ENCODE measurements at regions of chr2 and their contacts with region 1.

Region 1: GRCh38 chr2:85707304-85707703 is 13.1 kb downstream of the GNLY start:
- DNase-seq: peak; percentile 47
- ATAC-seq: peak; percentile 82
- H3K4me3 Mint-ChIP-seq: no peak overlapping the region
- H3K27ac Mint-ChIP-seq: no peak overlapping the region
- H3K4me1 Mint-ChIP-seq: peaks cover 15% of the 10 kb centered on the region
- H3K27me3 Mint-ChIP-seq: peaks cover 12% of the 10 kb centered on the region
- CTCF ChIP-seq: peak; percentile 72; the same call in 1 of the 2 replicates

Region 2: DNA sequence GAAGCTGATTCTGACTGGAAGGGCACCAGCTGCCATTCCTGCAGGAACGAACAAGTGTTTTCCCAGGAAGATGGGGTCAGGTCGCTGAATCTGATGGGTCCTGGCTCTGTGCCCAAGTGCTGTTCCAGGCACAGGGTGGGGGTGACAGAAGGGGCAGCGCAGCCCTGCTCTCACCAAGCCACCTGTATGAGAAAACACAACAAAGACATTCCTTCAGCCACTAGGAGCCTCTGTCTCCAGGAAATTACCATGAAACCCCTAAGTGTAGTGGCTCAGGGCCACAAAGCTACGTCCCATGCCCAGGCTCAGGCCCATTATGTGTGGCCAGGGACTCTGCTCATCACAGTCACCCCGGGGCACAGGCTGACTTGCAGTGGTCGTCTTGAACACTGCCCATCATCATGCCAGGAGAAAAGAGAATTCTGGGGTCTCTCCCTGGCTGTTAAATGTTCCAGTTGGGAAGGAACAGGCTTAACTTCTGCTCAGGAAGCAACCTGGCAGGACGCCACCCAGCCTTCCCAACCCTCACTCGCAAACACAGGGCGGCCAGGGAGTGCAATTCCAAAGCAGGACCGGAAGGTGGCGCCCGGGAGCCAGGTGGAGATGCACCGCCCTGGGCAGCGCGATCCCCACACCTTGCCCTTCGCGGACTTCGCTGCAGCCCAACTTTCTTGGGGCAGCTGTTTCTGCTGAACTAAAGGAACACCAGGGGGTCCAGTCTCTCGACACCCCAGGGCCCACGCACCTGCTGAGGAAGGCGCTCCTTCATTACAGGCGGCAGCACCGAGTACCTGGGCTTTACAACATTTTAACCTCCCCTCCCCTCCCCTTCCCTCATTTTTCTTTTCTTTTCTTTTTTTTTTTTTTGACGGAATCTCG is 28.3 kb before region 1 on chr2:
- CTCF ChIA-PET with region 1: interaction called, 42 read pairs
- POLR2A ChIA-PET with region 1: no interaction called
- DNase-seq: peak; percentile 92
- ATAC-seq: peak; percentile 96
- H3K4me3 Mint-ChIP-seq: no peak overlapping the region; the same call in 1 of the 2 replicates
- H3K27ac Mint-ChIP-seq: no peak overlapping the region
- H3K4me1 Mint-ChIP-seq: peaks cover 12% of the 10 kb centered on the region
- H3K27me3 Mint-ChIP-seq: peaks cover 5% of the 10 kb centered on the region
- CTCF ChIP-seq: peak; percentile 96

Region 3: DNA sequence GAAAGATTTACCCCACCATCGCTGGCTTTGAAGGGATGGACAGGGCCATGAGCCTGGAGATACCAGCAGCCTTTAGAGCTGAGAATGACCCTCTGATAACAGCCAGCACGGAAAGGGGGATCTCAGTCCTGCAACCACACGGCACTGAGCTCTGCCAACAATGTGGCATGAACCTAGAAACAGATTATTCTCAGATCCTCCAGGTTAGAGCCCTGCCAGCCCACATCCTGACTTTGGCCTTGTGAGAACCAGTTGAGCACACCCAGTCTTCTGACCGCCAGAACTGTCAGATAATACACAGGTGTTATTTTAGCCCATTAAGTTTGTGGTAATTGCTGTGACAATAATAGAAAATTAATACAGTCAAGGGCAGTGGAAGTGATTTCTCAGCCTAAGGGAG is 22.5 kb before region 1 on chr2:
- CTCF ChIA-PET with region 1: interaction called, 42 read pairs
- POLR2A ChIA-PET with region 1: no interaction called
- DNase-seq: no peak
- ATAC-seq: no peak
- H3K4me3 Mint-ChIP-seq: no peak overlapping the region
- H3K27ac Mint-ChIP-seq: no peak overlapping the region
- H3K4me1 Mint-ChIP-seq: 0 out of 2 replicates have a peak, but pooled peaks cover 4% of the 10 kb centered on the region
- H3K27me3 Mint-ChIP-seq: peaks cover 7% of the 10 kb centered on the region
- CTCF ChIP-seq: no peak

Region 4: GRCh38 chr2:85694052-85695025 is 13.0 kb before region 1 on chr2 and contains the start of gene GNLY:
- CTCF ChIA-PET with region 1: interaction called, 17 read pairs
- POLR2A ChIA-PET with region 1: no interaction called
- DNase-seq: no peak
- ATAC-seq: no peak
- H3K4me3 Mint-ChIP-seq: no peak within 1 kb of the TSS
- H3K27ac Mint-ChIP-seq: no peak within 1 kb of the TSS
- H3K4me1 Mint-ChIP-seq: no peaks in the 10 kb centered on the region
- H3K27me3 Mint-ChIP-seq: no peaks in the 10 kb centered on the region; the same call in 1 of the 2 replicates
- CTCF ChIP-seq: no peak
- total RNA-seq, gene GNLY: 0.44 TPM in 1 of 3 replicates, not detected in the others

Region 5: DNA sequence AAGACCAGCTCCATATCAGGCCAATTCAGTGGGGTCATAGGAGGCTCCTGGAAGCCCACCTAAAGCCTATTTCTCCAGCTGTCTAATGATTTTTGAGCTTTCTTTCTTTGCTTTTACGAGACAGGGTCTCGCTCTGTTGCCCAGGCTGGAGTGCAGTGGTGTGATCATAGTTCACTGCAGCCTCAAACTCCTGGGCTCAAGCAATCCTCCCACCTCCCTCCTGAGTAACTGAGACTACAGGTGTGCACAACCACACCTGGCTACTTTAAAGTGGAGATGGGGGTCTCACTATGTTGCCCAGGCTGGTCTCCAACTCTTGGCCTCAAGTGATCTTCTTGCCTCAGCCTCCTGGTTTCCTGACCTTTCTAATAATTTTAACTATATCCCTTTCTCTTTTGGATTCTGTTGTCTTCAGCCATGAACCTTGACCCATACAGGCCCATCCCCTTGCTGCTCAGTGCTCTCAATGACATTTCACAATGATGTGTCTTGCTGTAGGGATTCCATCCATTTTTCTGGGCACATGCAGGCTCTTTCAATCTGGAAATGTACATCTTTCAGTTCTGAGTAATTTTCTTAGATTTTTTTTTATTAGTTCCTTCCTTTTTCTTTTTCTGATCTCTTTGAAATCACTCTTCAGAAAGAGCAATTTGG is 16.5 kb after region 1 on chr2:
- CTCF ChIA-PET with region 1: interaction called, 26 read pairs
- POLR2A ChIA-PET with region 1: no interaction called
- DNase-seq: no peak
- ATAC-seq: no peak
- H3K4me3 Mint-ChIP-seq: no peak overlapping the region
- H3K27ac Mint-ChIP-seq: no peak overlapping the region
- H3K4me1 Mint-ChIP-seq: no peaks in the 10 kb centered on the region
- H3K27me3 Mint-ChIP-seq: no peaks in the 10 kb centered on the region; the same call in 1 of the 2 replicates
- CTCF ChIP-seq: no peak

Region 6: DNA sequence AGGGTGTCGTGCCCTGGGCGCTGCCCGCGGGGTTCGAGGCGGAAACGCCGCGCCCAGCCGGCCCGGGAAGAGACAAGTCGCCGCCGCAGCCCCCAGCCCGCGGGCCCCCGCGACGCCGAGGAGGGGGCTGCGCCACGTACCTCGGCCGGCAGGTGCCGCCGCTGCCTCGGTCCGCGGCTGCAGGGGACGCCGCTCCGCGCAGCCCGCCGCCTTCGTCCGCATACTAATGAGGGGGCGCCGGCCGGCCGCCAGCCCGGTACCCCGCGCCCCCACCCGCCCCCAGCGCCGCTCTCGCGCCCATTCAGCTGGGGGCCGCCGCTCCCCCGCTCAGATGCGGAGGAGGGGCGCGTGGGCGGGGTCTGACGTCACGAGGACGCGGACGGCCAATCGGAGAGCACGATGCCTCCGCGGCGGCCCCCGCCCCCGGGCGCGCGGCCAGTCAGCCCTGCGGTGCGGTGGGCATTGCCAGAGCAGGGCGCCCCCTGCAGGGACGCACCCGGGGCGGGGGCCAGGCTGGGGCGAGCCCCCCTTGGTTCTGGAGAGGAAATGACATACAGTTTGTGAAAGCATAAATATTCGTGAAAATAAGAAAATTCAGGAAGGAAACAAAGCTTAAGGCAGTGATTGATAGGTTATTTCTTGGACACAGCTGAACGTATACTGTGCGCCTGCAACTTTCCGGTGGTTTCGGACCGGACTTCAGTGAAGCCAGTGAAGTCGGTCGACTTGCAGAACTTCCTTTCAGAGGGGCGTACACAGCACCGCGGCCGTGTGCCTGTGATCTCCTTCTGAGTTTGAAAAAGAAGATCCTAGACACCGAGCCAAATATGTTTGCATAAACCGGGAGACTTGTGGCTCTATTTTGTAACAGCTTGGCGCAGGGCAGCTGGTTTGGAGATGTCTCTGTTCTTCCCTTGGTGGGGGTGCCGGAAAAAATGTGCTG is 181.7 kb after region 1 on chr2 and contains the start of gene ST3GAL5:
- CTCF ChIA-PET with region 1: no interaction called
- POLR2A ChIA-PET with region 1: no interaction called
- DNase-seq: peak; percentile 89
- ATAC-seq: peak; percentile 82
- H3K4me3 Mint-ChIP-seq: peak within 1 kb of the TSS; percentile 91
- H3K27ac Mint-ChIP-seq: no peak within 1 kb of the TSS
- H3K4me1 Mint-ChIP-seq: peaks cover 29% of the 10 kb centered on the region
- H3K27me3 Mint-ChIP-seq: peaks cover 29% of the 10 kb centered on the region
- CTCF ChIP-seq: no peak
- total RNA-seq, gene ST3GAL5: 5.9 to 6.8 TPM (median 6.2 TPM) in 3 replicates